ENCODE measurements at regions of chr15 and their contacts with region 1.

Region 1: DNA sequence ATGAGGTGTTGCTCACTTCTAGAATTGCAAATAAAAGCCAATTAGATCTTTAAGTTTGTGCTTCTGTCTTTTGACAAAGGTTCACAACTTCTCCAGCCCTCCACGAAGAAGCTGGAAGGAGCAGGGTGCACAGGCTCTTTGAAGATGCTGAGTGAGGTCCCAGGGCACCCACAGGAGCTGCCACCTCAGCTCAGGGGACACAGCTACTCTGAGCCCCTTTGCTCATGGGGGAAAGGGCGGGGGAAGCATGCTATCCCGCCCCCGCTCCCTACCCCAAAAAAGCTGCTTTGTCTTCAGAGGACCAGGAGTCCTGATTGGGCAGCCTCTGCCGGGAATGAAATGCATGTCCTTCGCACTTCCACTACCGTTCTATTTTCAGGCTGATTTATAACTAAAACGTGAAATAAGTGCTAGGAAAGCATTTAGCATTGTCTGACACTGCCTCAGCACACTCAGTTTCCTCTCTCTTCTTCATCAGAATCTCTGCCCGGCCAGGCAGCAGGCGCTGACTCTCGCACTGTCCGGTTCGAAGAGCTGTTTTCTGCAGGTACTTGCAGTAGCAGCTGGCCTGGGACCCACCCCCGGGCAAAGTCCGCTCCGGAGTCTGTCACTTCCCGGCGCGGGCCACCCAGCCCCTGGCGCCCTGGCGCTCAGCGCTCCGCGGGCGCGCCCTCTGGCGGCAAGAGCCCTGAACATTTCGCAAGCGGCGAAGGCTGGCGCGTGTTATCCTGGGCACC is 45.5 kb upstream of the KLHL25 start:
- DNase-seq: peak; percentile 65 to 80 (median 70)
- H3K4me3 ChIP-seq: no peak overlapping the region
- H3K4me3 Mint-ChIP-seq: peak overlapping the region; percentile 31 to 84 (median 67)
- H3K27ac ChIP-seq: no peak overlapping the region
- H3K27ac Mint-ChIP-seq: peak overlapping the region in 2 of 7 donors; percentile 10 to 12
- H3K4me1 ChIP-seq: peaks cover 10% of the 10 kb centered on the region
- H3K4me1 Mint-ChIP-seq: peaks cover 0 to 6% (median 3%) of the 10 kb centered on the region in 4 donors
- H3K27me3 ChIP-seq: no peaks in the 10 kb centered on the region
- H3K27me3 Mint-ChIP-seq: peaks cover under 1 to 6% of the 10 kb centered on the region in 2 donors

Region 2: GRCh38 chr15:85296615-85297402 is 543.4 kb before region 1 on chr15:
- CTCF ChIA-PET with region 1: interaction called, 10 read pairs
- POLR2A ChIA-PET with region 1: no interaction called
- intact Hi-C with region 1: loop called (anchors 10 kb)
- DNase-seq: peak; percentile 67 to 75 (median 72)
- H3K4me3 ChIP-seq: peak overlapping the region in 1 of 2 donors; percentile 20
- H3K4me3 Mint-ChIP-seq: peak overlapping the region in 7 of 8 donors; percentile 1 to 70 (median 65)
- H3K27ac ChIP-seq: no peak overlapping the region
- H3K27ac Mint-ChIP-seq: peak overlapping the region in 4 of 7 donors; percentile 24 to 73 (median 27)
- H3K4me1 ChIP-seq: peaks cover 6% of the 10 kb centered on the region
- H3K4me1 Mint-ChIP-seq: peaks cover 8 to 15% (median 10%) of the 10 kb centered on the region in 4 donors
- H3K27me3 ChIP-seq: no peaks in the 10 kb centered on the region
- H3K27me3 Mint-ChIP-seq: peaks cover 0 to under 1% of the 10 kb centered on the region in 2 donors

Region 3: DNA sequence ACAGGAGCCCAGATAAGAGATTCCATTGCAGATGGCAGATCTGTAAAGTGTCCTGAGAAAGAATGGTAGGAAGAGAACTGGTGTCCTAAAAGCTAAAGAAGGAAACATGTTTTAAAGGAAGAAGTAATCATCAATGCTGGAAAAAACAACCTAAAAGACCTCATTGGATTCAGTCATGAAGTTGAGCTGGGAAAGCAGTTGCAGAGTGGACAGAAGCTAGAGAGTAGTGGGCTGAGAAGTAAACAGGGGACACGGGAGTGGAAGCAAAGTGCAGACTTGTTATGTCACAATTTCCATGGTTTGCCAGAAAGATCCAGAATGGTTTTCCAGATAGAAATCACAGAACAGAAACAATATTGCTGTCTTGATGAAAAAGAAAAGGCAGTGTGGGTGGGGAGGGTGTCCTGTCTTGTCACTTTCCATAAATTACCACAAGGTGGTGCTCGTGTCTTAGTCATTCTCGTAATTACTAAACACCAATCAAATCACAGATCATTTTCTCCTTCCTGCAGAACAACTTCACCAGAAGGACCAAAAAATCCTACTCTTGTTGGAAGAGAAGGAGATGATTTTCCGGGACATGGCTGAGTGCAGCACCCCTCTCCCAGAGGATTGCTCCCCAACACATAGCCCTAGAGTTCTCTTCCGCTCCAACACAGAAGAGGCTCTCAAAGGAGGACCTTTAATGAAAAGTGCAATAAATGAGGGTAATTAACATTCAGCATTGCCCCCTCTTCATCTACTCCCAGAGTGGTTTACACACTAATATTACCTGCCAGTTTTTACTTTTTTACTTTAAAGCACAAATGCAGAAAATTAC is 110.0 kb before region 1 on chr15:
- CTCF ChIA-PET with region 1: interaction called, 152 read pairs
- POLR2A ChIA-PET with region 1: interaction called, 4 read pairs
- intact Hi-C with region 1: loop called (anchors 1 kb)
- DNase-seq: peak; percentile 61 to 68 (median 64)
- H3K4me3 ChIP-seq: no peak overlapping the region
- H3K4me3 Mint-ChIP-seq: no peak overlapping the region
- H3K27ac ChIP-seq: no peak overlapping the region
- H3K27ac Mint-ChIP-seq: peak overlapping the region; percentile 43 to 92 (median 83)
- H3K4me1 ChIP-seq: peaks cover 9% of the 10 kb centered on the region
- H3K4me1 Mint-ChIP-seq: peaks cover 9 to 16% (median 14%) of the 10 kb centered on the region in 4 donors
- H3K27me3 ChIP-seq: no peaks in the 10 kb centered on the region
- H3K27me3 Mint-ChIP-seq: no peaks in the 10 kb centered on the region

Region 4: GRCh38 chr15:85742186-85742821 is 97.9 kb before region 1 on chr15:
- CTCF ChIA-PET with region 1: interaction called, 14 read pairs
- POLR2A ChIA-PET with region 1: interaction called, 3 read pairs
- intact Hi-C with region 1: no loop called
- DNase-seq: no peak
- H3K4me3 ChIP-seq: no peak overlapping the region
- H3K4me3 Mint-ChIP-seq: no peak overlapping the region
- H3K27ac ChIP-seq: no peak overlapping the region
- H3K27ac Mint-ChIP-seq: peak overlapping the region in 4 of 7 donors; percentile 19 to 63 (median 50)
- H3K4me1 ChIP-seq: no peaks in the 10 kb centered on the region
- H3K4me1 Mint-ChIP-seq: peaks cover 0 to 7% (median 4%) of the 10 kb centered on the region in 4 donors
- H3K27me3 ChIP-seq: no peaks in the 10 kb centered on the region
- H3K27me3 Mint-ChIP-seq: no peaks in the 10 kb centered on the region

Region 5: GRCh38 chr15:85794603-85795336 is 45.5 kb before region 1 on chr15 and contains the start of gene KLHL25:
- CTCF ChIA-PET with region 1: interaction called, 4 read pairs
- POLR2A ChIA-PET with region 1: no interaction called
- intact Hi-C with region 1: loop called (anchors 5 kb)
- DNase-seq: peak; percentile 91 to 95 (median 92)
- H3K4me3 ChIP-seq: peak within 1 kb of the TSS; percentile 70 to 80
- H3K4me3 Mint-ChIP-seq: peak within 1 kb of the TSS; percentile 87 to 97 (median 93)
- H3K27ac ChIP-seq: peak within 1 kb of the TSS; percentile 65
- H3K27ac Mint-ChIP-seq: peak within 1 kb of the TSS; percentile 71 to 96 (median 91)
- H3K4me1 ChIP-seq: peaks cover 30% of the 10 kb centered on the region
- H3K4me1 Mint-ChIP-seq: peaks cover 25 to 51% (median 37%) of the 10 kb centered on the region in 4 donors
- H3K27me3 ChIP-seq: no peaks in the 10 kb centered on the region
- H3K27me3 Mint-ChIP-seq: no peaks in the 10 kb centered on the region
- total RNA-seq, gene KLHL25: 10.3 to 11.4 TPM

Measured in CD4-positive, alpha-beta memory T cell (primary cell).